ENCODE measurements at regions of chr6 and their contacts with region 1.

Region 1: GRCh38 chr6:17599885-17600526 is at the start of gene FAM8A1:
- DNase-seq: peak; percentile 95 to 97 (median 96)
- H3K4me3 ChIP-seq: peak within 1 kb of the TSS; percentile 73
- H3K27ac ChIP-seq: peak within 1 kb of the TSS; percentile 96 to 98
- H3K4me1 ChIP-seq: peaks cover 4% of the 10 kb centered on the region
- H3K27me3 ChIP-seq: no peaks in the 10 kb centered on the region
- CTCF ChIP-seq: peak; percentile 63 to 91 (median 84)
- EP300 ChIP-seq: no peak
- POLR2A ChIP-seq: peak; percentile 83
- total RNA-seq, gene FAM8A1: 26.4 to 39.7 (median 31.0) TPM

Region 2: DNA sequence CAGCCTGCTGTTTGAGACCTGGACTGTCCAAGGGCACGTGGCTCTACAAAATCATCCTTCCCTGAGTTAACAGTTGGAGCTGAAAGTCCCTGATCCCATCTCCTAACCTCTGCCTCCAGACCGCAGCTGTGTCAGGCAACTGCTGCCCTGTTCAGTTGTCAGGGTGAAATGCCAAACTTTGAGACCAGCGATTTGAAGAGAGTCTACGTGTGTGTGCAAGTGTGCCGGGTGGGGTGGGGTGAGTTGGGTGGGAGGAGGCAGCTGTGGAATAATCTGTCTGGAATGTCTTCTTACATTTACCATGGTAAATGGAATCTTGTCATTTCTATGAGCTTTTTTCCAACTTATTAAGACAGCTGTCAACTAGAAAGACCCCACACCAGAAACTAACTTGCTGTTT is 80.9 kb before region 1 on chr6:
- intact Hi-C with region 1: no loop called
- DNase-seq: no peak
- H3K4me3 ChIP-seq: no peak overlapping the region
- H3K27ac ChIP-seq: no peak overlapping the region
- H3K4me1 ChIP-seq: no peaks in the 10 kb centered on the region
- H3K27me3 ChIP-seq: no peaks in the 10 kb centered on the region
- CTCF ChIP-seq: no peak
- EP300 ChIP-seq: no peak
- POLR2A ChIP-seq: no peak

Region 3: GRCh38 chr6:17706580-17707370 is 106.8 kb after region 1 on chr6 and contains the start of gene NUP153:
- intact Hi-C with region 1: loop called in 2 of 4 experiments (anchors 5 to 10 kb)
- DNase-seq: peak; percentile 97 to 100 (median 99)
- H3K4me3 ChIP-seq: peak within 1 kb of the TSS; percentile 92
- H3K27ac ChIP-seq: peak within 1 kb of the TSS; percentile 98 to 99
- H3K4me1 ChIP-seq: peaks cover 5% of the 10 kb centered on the region
- H3K27me3 ChIP-seq: no peaks in the 10 kb centered on the region
- CTCF ChIP-seq: no peak
- EP300 ChIP-seq: peak; percentile 55
- POLR2A ChIP-seq: peak; percentile 97
- total RNA-seq, gene NUP153: 25.2 to 43.4 (median 34.6) TPM

Region 4: DNA sequence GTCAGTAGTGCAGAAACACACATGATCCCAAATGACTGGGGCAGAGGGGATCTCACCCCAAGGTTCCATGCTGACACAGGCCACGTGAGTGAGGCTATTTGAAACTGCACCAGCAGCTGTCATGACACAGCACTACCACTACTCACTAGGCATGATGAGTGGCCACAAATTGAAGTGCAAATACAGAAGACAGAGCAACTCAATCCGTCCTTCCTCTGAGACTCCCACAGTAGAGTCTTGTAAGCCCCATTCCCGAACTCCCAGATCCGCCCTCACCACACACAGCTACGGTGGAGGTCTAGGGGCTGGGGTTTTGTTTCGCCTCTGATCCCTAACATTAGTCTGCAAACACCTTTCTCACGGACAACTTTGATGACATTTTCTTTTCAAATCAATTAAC is 220.0 kb after region 1 on chr6:
- intact Hi-C with region 1: loop called in 1 of 4 experiments (anchors 10 kb)
- DNase-seq: no peak
- H3K4me3 ChIP-seq: no peak overlapping the region
- H3K27ac ChIP-seq: no peak overlapping the region
- H3K4me1 ChIP-seq: no peaks in the 10 kb centered on the region
- H3K27me3 ChIP-seq: no peaks in the 10 kb centered on the region
- CTCF ChIP-seq: no peak
- EP300 ChIP-seq: no peak
- POLR2A ChIP-seq: no peak

Region 5: GRCh38 chr6:17998456-17998855 is 398.4 kb after region 1 on chr6:
- intact Hi-C with region 1: loop called in 1 of 4 experiments (anchors 10 kb)
- DNase-seq: no peak
- H3K4me3 ChIP-seq: no peak overlapping the region
- H3K27ac ChIP-seq: no peak overlapping the region
- H3K4me1 ChIP-seq: no peaks in the 10 kb centered on the region
- H3K27me3 ChIP-seq: no peaks in the 10 kb centered on the region
- CTCF ChIP-seq: no peak
- EP300 ChIP-seq: no peak
- POLR2A ChIP-seq: no peak